Gastrocnemius medialis (tissue), 4 donors: ENCODE measurements at regions of chr2 and their contacts with region 1.

Region 1: DNA sequence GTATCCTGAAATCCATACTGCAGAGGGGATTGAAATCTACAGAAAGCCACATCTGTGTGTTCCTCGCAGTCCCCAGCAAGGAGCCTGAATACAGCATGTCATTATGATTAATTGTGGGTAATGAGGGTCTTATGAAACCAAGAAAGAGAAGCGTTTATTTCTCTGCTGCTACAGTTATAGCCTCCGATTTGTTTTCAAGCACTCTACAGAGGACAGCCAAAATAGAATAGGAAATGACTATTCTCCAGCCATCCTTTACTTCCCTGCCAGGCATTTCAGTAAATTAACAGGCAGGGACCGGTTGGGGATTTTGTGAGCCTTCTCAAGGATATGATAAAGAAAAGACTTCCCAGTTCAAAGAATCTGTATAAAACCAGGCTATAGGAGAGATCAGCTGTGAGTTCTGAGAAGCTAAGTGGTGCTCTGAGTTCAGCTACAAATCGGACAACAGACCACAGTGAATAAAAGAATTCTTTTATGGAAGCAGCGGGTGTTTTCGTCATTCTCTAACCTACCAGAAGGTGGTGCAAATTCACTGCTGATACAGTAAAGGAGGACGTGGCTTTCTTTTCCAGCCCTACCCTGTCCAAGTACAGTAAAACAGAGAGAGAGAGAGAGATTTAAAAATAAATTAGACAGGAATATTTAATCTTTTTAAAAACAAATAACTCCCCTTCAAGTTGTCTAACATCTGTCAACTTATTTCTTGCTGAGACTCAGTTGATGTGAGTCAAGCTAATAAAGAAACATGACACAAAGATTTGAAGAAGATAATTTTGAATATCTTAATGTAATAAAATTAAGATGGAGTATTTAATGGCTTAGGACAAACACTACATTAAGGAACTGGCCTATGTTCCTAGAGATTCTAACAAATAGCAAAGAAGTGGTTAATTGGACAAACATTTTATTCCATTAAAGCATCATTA is 133.7 kb downstream of the INSIG2 start:
- DNase-seq: peak; percentile 25 to 53
- ATAC-seq: peak; percentile 63 to 76
- H3K4me3 ChIP-seq: peak overlapping the region in 3 of 4 donors; percentile 59 to 72 (median 67)
- H3K27ac ChIP-seq: peak overlapping the region; percentile 88 to 92 (median 90)
- H3K4me1 ChIP-seq: peaks cover 20 to 21% of the 10 kb centered on the region in 2 donors
- H3K27me3 ChIP-seq: peaks cover 0 to 5% (median 0%) of the 10 kb centered on the region in 3 donors
- CTCF ChIP-seq: peak; percentile 67 to 81 (median 70)
- POLR2A ChIP-seq: no peak

Region 2: GRCh38 chr2:118309946-118310680 is 88.2 kb after region 1 on chr2:
- in situ Hi-C with region 1: no loop called
- intact Hi-C with region 1: loop called (anchors 1 kb)
- DNase-seq: peak in 1 of 2 donors; percentile 30
- ATAC-seq: peak; percentile 44 to 65
- H3K4me3 ChIP-seq: peak overlapping the region; percentile 68 to 78 (median 74)
- H3K27ac ChIP-seq: peak overlapping the region; percentile 84 to 90 (median 86)
- H3K4me1 ChIP-seq: peaks cover 19 to 24% of the 10 kb centered on the region in 2 donors
- H3K27me3 ChIP-seq: no peaks in the 10 kb centered on the region
- CTCF ChIP-seq: no peak
- POLR2A ChIP-seq: peak; percentile 28 to 44

Region 3: DNA sequence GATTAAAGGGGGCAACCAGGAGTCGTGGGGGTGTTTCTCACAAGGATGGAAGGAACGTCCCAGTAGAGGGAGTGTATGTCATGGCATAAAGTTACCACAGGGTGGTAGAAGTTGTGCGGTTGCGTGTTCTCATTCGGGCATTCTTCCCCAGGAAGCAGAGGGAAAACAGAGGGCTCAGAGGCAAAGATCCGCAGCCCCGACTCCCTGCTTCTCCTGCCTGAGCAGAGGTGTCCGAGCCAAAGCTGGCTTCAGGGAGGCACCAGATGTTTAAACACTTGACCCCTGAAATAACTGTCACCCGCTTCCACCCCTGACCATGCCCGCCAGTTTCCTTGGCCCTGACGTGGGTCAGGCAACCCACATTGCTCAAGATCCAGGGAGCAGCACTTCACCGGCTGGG is 541.9 kb after region 1 on chr2:
- in situ Hi-C with region 1: loop called in 3 of 4 experiments (anchors 10 to 25 kb)
- intact Hi-C with region 1: loop called (anchors 5 kb)
- DNase-seq: peak; percentile 20 to 55
- ATAC-seq: peak; percentile 98 to 100
- H3K4me3 ChIP-seq: peak overlapping the region; percentile 24 to 48 (median 34)
- H3K27ac ChIP-seq: peak overlapping the region; percentile 50 to 64 (median 63)
- H3K4me1 ChIP-seq: no peaks in the 10 kb centered on the region
- H3K27me3 ChIP-seq: no peaks in the 10 kb centered on the region
- CTCF ChIP-seq: peak; percentile 67 to 78 (median 70)
- POLR2A ChIP-seq: no peak

Region 4: DNA sequence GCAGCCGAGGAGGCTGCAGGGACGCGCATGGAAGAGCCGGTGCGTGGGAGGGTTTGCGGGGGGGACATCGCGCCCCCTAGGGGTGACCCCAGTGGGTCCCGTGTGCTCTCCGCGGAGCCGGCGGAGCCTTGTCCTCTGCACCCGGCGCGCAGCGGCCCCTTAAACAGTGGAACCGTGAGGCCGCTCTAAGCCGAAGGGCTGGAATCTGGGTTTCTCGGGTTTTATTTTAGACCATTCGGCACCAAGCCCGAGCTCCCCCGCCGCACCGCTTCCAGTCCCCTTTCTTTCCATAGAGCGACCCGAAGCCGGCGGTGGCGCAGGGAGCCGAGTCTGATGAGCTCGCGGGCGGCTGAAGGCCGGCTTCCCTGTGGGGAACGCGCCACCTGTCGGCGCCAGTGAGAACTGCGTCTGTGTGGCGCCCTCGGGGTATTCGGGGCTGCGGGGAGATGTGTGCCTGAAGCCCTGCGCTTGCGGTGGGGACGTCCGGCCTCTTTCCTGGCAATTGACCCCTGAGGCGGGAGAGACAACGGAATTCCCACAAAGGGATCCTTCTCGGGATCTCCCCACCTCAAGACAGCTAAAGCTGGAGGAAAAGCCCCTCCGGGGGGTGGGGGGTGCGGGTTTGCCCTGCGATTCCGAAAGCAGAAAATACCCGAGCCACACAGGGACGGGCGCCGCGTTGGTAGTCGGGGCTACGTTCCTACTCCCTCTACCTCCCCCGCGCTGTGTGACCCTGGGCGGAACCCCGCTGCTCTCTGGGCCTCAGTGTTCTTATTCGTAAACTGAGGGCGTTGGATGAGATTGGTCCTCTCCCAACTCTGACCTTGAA is 633.7 kb after region 1 on chr2:
- in situ Hi-C with region 1: loop called in 3 of 4 experiments (anchors 5 to 10 kb)
- intact Hi-C with region 1: loop called (anchors 1 kb)
- DNase-seq: peak; percentile 65 to 79
- ATAC-seq: peak; percentile 63 to 65
- H3K4me3 ChIP-seq: peak overlapping the region; percentile 64 to 87 (median 73)
- H3K27ac ChIP-seq: peak overlapping the region; percentile 92 to 97 (median 96)
- H3K4me1 ChIP-seq: peaks cover 0 to 10% of the 10 kb centered on the region in 2 donors
- H3K27me3 ChIP-seq: peaks cover 0 to 14% (median 7%) of the 10 kb centered on the region in 3 donors
- CTCF ChIP-seq: peak; percentile 90 to 99 (median 98)
- POLR2A ChIP-seq: no peak